ENCODE measurements at regions of chr18 and their contacts with region 1.

Region 1: GRCh38 chr18:21820035-21820810 is 79.6 kb downstream of the MIB1 start:
- DNase-seq: peak; percentile 4
- H3K4me3 ChIP-seq: no peak overlapping the region
- H3K27ac ChIP-seq: no peak overlapping the region
- H3K4me1 ChIP-seq: no peaks in the 10 kb centered on the region
- H3K27me3 ChIP-seq: no peaks in the 10 kb centered on the region
- CTCF ChIP-seq: peak; percentile 55 to 63

Region 2: DNA sequence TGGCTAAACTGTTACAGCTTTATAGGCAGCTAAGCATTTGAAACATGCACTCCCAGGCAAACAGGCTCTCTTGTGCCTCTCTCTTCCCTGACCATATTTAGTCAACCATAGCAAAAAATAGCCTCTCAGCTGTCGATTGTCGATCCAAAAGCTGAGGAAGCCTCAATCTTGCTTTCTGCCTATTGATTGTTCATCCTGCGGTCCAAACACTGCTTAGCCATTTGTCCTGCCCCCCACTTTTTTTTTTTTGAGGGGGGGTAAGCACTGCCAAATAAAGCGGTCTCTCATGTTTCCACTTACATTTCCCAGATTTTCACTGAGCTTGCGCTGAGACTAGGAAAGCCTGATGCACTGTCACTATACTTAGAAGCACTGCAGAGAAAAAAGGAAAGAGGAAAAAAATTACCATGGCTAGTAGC is 11.2 kb after region 1 on chr18:
- CTCF ChIA-PET with region 1: interaction called, 21 read pairs
- dilution Hi-C with region 1: no loop called
- in situ Hi-C with region 1: no loop called
- intact Hi-C with region 1: no loop called
- DNase-seq: no peak
- H3K4me3 ChIP-seq: no peak overlapping the region
- H3K27ac ChIP-seq: no peak overlapping the region
- H3K4me1 ChIP-seq: peaks cover under 1% of the 10 kb centered on the region
- H3K27me3 ChIP-seq: no peaks in the 10 kb centered on the region
- CTCF ChIP-seq: no peak

Measured in mammary epithelial cell (primary cell).